Mammary epithelial cell (primary cell): ENCODE measurements at regions of chr3 and their contacts with region 1.

Region 1: GRCh38 chr3:40827942-40828688 is 303.4 kb downstream of the ZNF621 start:
- DNase-seq: peak; percentile 76
- H3K4me3 ChIP-seq: no peak overlapping the region
- H3K27ac ChIP-seq: peak overlapping the region; percentile 58
- H3K4me1 ChIP-seq: peaks cover 12% of the 10 kb centered on the region
- H3K27me3 ChIP-seq: no peaks in the 10 kb centered on the region
- CTCF ChIP-seq: no peak

Region 2: GRCh38 chr3:40690749-40691451 is 137.2 kb before region 1 on chr3:
- CTCF ChIA-PET with region 1: no interaction called
- dilution Hi-C with region 1: no loop called
- in situ Hi-C with region 1: no loop called
- intact Hi-C with region 1: no loop called
- DNase-seq: no peak
- H3K4me3 ChIP-seq: no peak overlapping the region
- H3K27ac ChIP-seq: no peak overlapping the region
- H3K4me1 ChIP-seq: peaks cover 9% of the 10 kb centered on the region
- H3K27me3 ChIP-seq: no peaks in the 10 kb centered on the region
- CTCF ChIP-seq: no peak

Region 3: GRCh38 chr3:40741729-40742128 is 86.4 kb before region 1 on chr3:
- CTCF ChIA-PET with region 1: no interaction called
- dilution Hi-C with region 1: no loop called
- in situ Hi-C with region 1: no loop called
- intact Hi-C with region 1: no loop called
- DNase-seq: no peak
- H3K4me3 ChIP-seq: no peak overlapping the region
- H3K27ac ChIP-seq: no peak overlapping the region
- H3K4me1 ChIP-seq: no peaks in the 10 kb centered on the region
- H3K27me3 ChIP-seq: no peaks in the 10 kb centered on the region
- CTCF ChIP-seq: no peak

Region 4: GRCh38 chr3:40800343-40800742 is 27.8 kb before region 1 on chr3:
- CTCF ChIA-PET with region 1: no interaction called
- dilution Hi-C with region 1: no loop called
- in situ Hi-C with region 1: no loop called
- intact Hi-C with region 1: no loop called
- DNase-seq: peak; percentile 96
- H3K4me3 ChIP-seq: peak overlapping the region in 1 of 3 experiments; percentile 22
- H3K27ac ChIP-seq: peak overlapping the region; percentile 46
- H3K4me1 ChIP-seq: peaks cover 29% of the 10 kb centered on the region
- H3K27me3 ChIP-seq: no peaks in the 10 kb centered on the region
- CTCF ChIP-seq: no peak

Region 5: DNA sequence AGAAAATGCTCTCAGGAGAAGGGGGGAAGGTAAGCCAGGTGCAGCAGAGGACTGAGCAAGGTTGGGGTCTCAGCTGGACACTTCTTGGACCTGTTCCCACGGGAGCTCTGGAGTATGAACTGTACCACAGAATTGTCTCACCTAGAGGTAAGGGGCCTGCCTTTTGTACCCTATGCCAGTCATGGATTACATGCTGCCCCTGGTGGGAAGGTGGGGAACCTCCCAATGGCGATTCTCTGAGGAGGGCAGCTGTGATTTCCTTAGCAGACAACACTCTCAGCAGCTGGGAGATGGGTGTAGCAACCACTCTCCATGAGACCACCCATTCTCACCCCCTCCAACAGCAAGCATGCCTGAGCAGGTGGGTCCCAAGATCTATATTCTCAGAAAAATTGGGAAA is 41.8 kb after region 1 on chr3:
- CTCF ChIA-PET with region 1: no interaction called
- dilution Hi-C with region 1: loop called (anchors 5 kb)
- in situ Hi-C with region 1: no loop called
- intact Hi-C with region 1: no loop called
- DNase-seq: no peak
- H3K4me3 ChIP-seq: no peak overlapping the region
- H3K27ac ChIP-seq: no peak overlapping the region
- H3K4me1 ChIP-seq: no peaks in the 10 kb centered on the region
- H3K27me3 ChIP-seq: no peaks in the 10 kb centered on the region
- CTCF ChIP-seq: no peak